ENCODE measurements at regions of chr1 and their contacts with region 1.

Region 1: GRCh38 chr1:110312188-110313121 is 26.7 kb upstream of the RBM15 start:
- DNase-seq: peak; percentile 78
- ATAC-seq: peak; percentile 99
- H3K4me3 Mint-ChIP-seq: no peak overlapping the region
- H3K27ac Mint-ChIP-seq: no peak overlapping the region
- H3K4me1 Mint-ChIP-seq: no peaks in the 10 kb centered on the region
- H3K27me3 Mint-ChIP-seq: no peaks in the 10 kb centered on the region
- CTCF ChIP-seq: peak; percentile 88

Region 2: GRCh38 chr1:109931189-109931731 is 381.2 kb before region 1 on chr1:
- CTCF ChIA-PET with region 1: no interaction called
- POLR2A ChIA-PET with region 1: no interaction called
- intact Hi-C with region 1: no loop called
- DNase-seq: no peak
- ATAC-seq: no peak
- H3K4me3 Mint-ChIP-seq: no peak overlapping the region
- H3K27ac Mint-ChIP-seq: no peak overlapping the region
- H3K4me1 Mint-ChIP-seq: peaks cover 7% of the 10 kb centered on the region
- H3K27me3 Mint-ChIP-seq: no peaks in the 10 kb centered on the region
- CTCF ChIP-seq: no peak

Region 3: DNA sequence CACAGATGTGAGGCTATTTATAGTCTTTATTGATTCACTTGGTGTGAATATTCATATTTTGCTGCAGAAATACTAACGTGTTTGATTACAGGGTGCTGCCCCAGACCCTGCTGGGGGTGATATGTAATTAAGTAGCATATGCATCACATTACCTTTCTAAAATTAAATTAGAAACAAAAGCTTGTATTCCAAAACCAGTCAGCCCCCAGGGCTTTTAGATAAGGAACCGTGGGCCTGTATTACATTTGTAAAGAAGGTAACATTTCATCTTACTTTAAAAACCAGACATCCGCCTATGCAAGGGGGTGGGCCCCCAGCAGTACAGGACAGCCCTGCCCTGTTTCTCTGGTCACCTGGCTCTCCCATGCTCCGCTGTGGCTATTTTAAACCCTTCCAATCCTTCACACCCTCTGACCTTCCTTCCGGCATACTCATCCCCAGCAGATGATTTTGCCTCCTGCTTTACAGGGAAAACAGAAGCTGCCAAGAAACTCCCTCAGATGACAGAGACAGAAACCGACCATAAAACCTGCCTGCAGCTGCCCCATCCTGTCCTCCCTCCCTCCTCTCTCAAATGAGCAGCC is 124.3 kb before region 1 on chr1:
- CTCF ChIA-PET with region 1: interaction called, 13 read pairs
- POLR2A ChIA-PET with region 1: no interaction called
- intact Hi-C with region 1: no loop called
- DNase-seq: no peak
- ATAC-seq: no peak
- H3K4me3 Mint-ChIP-seq: no peak overlapping the region
- H3K27ac Mint-ChIP-seq: no peak overlapping the region
- H3K4me1 Mint-ChIP-seq: peaks cover 9% of the 10 kb centered on the region
- H3K27me3 Mint-ChIP-seq: peaks cover 8% of the 10 kb centered on the region
- CTCF ChIP-seq: no peak

Region 4: GRCh38 chr1:110218739-110219138 is 93.7 kb before region 1 on chr1:
- CTCF ChIA-PET with region 1: interaction called, 13 read pairs
- POLR2A ChIA-PET with region 1: interaction called, 5 read pairs
- intact Hi-C with region 1: no loop called
- DNase-seq: no peak
- ATAC-seq: no peak
- H3K4me3 Mint-ChIP-seq: no peak overlapping the region
- H3K27ac Mint-ChIP-seq: no peak overlapping the region
- H3K4me1 Mint-ChIP-seq: peaks cover 27% of the 10 kb centered on the region
- H3K27me3 Mint-ChIP-seq: no peaks in the 10 kb centered on the region
- CTCF ChIP-seq: no peak

Region 5: GRCh38 chr1:110292031-110292741 is 20.3 kb before region 1 on chr1:
- CTCF ChIA-PET with region 1: interaction called, 12 read pairs
- POLR2A ChIA-PET with region 1: no interaction called
- intact Hi-C with region 1: no loop called
- DNase-seq: no peak
- ATAC-seq: no peak
- H3K4me3 Mint-ChIP-seq: no peak overlapping the region
- H3K27ac Mint-ChIP-seq: no peak overlapping the region
- H3K4me1 Mint-ChIP-seq: no peaks in the 10 kb centered on the region
- H3K27me3 Mint-ChIP-seq: no peaks in the 10 kb centered on the region
- CTCF ChIP-seq: no peak

Region 6: DNA sequence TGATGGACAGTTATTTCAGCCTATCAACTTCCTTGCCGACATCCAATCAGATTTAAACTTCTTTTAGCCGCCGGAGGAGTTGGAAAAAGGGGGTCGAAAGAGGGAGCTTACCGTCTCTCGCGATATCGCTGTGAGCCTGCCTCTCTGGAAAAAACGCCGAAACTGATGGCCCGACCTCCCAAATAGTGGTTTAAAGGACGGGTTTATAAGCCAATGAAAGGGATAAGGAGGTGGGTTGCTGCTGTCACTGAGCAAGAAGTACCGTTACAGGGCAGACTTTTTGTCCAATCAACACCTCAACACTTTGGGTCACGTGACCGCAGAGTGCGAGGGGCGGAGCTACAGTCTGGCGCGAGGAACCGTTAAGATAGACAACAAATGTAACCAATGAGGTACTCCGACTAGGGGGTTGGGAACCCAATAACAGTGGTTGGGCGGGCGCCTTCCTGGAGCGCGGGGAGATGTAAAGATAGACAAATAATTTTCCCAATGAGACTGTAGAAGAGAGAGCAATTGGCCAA is 26.5 kb after region 1 on chr1 and contains the start of gene RBM15:
- CTCF ChIA-PET with region 1: interaction called, 16 read pairs
- POLR2A ChIA-PET with region 1: interaction called, 6 read pairs
- intact Hi-C with region 1: no loop called
- DNase-seq: peak; percentile 98
- ATAC-seq: peak; percentile 80
- H3K4me3 Mint-ChIP-seq: no peak within 1 kb of the TSS
- H3K27ac Mint-ChIP-seq: no peak within 1 kb of the TSS
- H3K4me1 Mint-ChIP-seq: peaks cover 49% of the 10 kb centered on the region
- H3K27me3 Mint-ChIP-seq: no peaks in the 10 kb centered on the region
- CTCF ChIP-seq: no peak
- total RNA-seq, gene RBM15: 70.8 to 72.5 TPM

Region 7: GRCh38 chr1:110393691-110394564 is 81.5 kb after region 1 on chr1:
- CTCF ChIA-PET with region 1: no interaction called
- POLR2A ChIA-PET with region 1: no interaction called
- intact Hi-C with region 1: no loop called
- DNase-seq: no peak
- ATAC-seq: no peak
- H3K4me3 Mint-ChIP-seq: no peak overlapping the region
- H3K27ac Mint-ChIP-seq: no peak overlapping the region
- H3K4me1 Mint-ChIP-seq: peaks cover 4% of the 10 kb centered on the region
- H3K27me3 Mint-ChIP-seq: no peaks in the 10 kb centered on the region
- CTCF ChIP-seq: no peak